ENCODE measurements at regions of chr1 and their contacts with region 1.

Region 1: DNA sequence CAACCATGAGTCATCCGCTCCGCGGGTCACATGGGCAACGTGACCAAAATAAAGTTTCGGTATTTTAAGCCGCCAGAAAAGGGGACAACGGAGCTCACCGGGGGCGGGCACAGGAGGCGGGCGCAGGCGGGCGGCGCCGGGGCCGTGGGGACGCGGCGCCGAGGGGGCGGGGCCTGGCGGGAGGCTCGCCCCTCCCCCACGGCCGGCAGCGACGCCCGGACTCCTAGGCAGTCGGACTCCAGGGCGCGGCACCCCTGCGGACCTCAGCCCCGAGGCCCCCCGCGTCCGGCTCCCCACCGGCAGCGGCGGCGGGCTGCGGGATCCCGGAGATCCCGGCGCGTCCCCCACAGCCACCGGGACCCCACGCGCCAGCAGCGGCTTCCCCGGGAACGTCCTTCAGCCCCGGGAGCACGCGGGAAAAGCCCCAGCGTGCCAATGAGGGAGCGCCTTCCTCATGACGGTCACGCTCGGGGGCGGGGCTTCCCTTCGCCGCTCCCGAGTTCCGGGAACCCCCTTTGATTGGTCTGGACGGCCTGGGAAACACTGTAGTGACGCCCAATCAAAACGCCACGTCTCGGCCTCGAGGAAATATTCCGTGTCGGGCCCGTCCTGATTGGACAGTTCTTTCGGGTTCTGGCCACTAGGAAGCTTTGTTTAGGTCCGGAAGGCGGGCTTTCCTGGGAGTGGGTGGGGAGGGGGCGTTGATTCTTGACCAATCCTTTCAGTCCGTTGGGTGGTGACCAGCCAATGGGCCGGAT is 515 bp upstream of the CAMTA1 start:
- DNase-seq: peak; percentile 100
- H3K4me3 Mint-ChIP-seq: peak overlapping the region; percentile 88
- H3K27ac Mint-ChIP-seq: peak overlapping the region; percentile 91
- H3K4me1 Mint-ChIP-seq: peaks cover 32% of the 10 kb centered on the region
- H3K27me3 Mint-ChIP-seq: peaks cover 4% of the 10 kb centered on the region

Region 2: DNA sequence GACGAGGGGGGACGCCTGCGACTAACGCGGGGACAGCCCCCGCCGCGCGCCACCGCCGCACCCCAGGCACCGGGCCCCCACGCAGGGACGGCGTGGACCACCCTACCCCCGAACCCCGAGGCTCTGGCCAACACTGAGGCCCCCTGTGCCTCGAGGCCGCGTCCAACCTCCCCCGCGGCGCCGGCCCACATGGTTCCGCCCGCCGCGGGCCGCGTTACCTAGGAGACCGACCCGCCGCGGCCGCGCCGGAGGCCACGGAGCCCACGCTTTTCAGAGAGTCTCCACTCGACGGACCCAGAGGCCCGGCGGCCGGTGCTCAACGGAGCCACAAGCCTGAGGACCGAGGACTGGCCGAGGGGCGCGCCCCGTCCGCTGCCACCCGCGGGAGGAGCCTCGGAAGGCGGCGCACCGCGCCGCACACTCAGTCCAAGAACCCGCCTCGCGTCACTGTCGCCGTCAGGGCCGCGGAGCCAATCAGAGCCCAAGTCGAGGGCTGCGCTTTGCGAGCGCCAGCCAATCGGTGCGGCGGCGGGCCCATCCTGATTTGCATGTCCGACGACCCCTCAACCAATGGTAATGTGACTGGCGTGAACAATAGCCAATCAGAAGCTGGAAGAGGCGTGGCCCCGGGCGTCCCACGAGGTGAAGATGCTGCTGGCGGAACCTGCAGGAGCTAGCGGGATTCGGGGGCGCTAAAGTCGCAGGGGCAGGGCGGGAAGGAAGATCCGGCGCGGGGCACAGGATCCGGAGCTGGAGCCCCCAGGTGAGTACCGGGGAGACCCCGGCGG is 792.5 kb before region 1 on chr1 and contains the start of gene NPHP4:
- intact Hi-C with region 1: loop called (anchors 10 kb)
- DNase-seq: peak; percentile 100
- H3K4me3 Mint-ChIP-seq: peak within 1 kb of the TSS; percentile 99
- H3K27ac Mint-ChIP-seq: peak within 1 kb of the TSS; percentile 97
- H3K4me1 Mint-ChIP-seq: peaks cover 26% of the 10 kb centered on the region
- H3K27me3 Mint-ChIP-seq: no peaks in the 10 kb centered on the region
- total RNA-seq, gene NPHP4: 20.0 and 21.0 TPM in 2 replicates

Region 3: GRCh38 chr1:6613361-6614018 is 171.2 kb before region 1 on chr1 and contains the start of gene PHF13:
- intact Hi-C with region 1: loop called (anchors 2 kb)
- DNase-seq: peak; percentile 100
- H3K4me3 Mint-ChIP-seq: peak within 1 kb of the TSS; percentile 95
- H3K27ac Mint-ChIP-seq: peak within 1 kb of the TSS; percentile 85
- H3K4me1 Mint-ChIP-seq: peaks cover 21% of the 10 kb centered on the region
- H3K27me3 Mint-ChIP-seq: peaks cover 2% of the 10 kb centered on the region
- total RNA-seq, gene PHF13: 19.1 and 20.1 TPM in 2 replicates

Region 4: GRCh38 chr1:6701437-6702153 is 83.1 kb before region 1 on chr1 and contains the start of gene DNAJC11:
- intact Hi-C with region 1: loop called (anchors 1 kb)
- DNase-seq: peak; percentile 99
- H3K4me3 Mint-ChIP-seq: peak within 1 kb of the TSS; percentile 91
- H3K27ac Mint-ChIP-seq: peak within 1 kb of the TSS; percentile 96
- H3K4me1 Mint-ChIP-seq: peaks cover 25% of the 10 kb centered on the region
- H3K27me3 Mint-ChIP-seq: no peaks in the 10 kb centered on the region
- total RNA-seq, gene DNAJC11: 87.6 and 92.5 TPM in 2 replicates

Region 5: DNA sequence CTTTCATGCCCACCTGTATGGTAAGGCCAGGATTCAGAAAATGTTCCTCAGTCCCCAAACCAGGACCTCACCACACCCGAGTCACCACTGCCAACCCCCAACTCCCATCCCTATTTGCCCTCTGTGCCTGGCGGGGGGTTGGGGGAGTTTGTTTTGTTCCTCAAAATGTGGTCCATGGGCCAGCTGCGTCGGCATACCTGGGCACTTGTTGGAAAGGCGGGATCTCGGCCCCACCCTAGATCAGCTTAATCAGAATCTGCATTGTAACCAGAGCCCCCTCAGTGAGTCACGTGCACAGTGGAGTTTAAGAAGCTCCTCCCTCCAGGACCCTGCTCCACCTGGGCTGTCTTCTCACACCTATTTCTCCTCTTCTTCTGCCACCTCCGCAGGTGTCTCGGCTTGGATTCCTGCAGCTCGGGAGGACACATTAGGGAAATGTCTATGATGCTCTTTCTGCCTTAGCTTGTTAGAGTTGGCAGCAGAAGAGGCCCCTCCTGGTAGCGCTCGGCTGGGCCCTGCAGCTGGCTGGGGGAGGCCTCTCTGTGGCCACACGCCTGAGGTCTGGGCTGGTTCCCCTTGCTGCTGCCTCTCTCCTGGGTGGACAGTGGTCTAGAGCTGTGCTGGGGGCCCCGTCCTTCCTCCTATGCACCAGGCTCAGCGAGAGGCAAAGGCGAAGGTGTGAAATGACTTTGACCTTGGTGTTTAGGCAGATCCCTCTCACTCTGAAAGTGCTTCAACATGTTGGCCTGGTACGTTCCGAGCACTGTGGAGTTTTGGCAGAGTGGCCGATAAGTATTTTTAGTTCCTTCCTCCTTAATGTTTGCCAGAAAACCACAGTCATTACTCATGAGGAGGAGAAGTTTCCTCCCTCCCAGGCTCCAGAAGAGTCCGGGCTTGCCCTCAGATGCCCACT is 41.3 kb before region 1 on chr1:
- intact Hi-C with region 1: loop called (anchors 1 kb)
- DNase-seq: peak; percentile 76
- H3K4me3 Mint-ChIP-seq: no peak overlapping the region
- H3K27ac Mint-ChIP-seq: no peak overlapping the region
- H3K4me1 Mint-ChIP-seq: peaks cover 12% of the 10 kb centered on the region
- H3K27me3 Mint-ChIP-seq: peaks cover 11% of the 10 kb centered on the region

Region 6: GRCh38 chr1:6801966-6802365 is 17.2 kb after region 1 on chr1:
- intact Hi-C with region 1: no loop called
- DNase-seq: no peak
- H3K4me3 Mint-ChIP-seq: no peak overlapping the region
- H3K27ac Mint-ChIP-seq: no peak overlapping the region
- H3K4me1 Mint-ChIP-seq: peaks cover 21% of the 10 kb centered on the region
- H3K27me3 Mint-ChIP-seq: no peaks in the 10 kb centered on the region